GM10248 (cell line): ENCODE measurements at regions of chr17 and their contacts with region 1.

Region 1: GRCh38 chr17:12744298-12744697 is 45.0 kb upstream of the ARHGAP44 start:
- DNase-seq: no peak
- CTCF ChIP-seq: no peak

Region 2: GRCh38 chr17:12256380-12256995 is 487.8 kb before region 1 on chr17:
- CTCF ChIA-PET with region 1: interaction called, 12 read pairs
- POLR2A ChIA-PET with region 1: no interaction called
- DNase-seq: peak; percentile 47
- CTCF ChIP-seq: peak; percentile 75

Region 3: GRCh38 chr17:12659500-12659899 is 84.8 kb before region 1 on chr17:
- CTCF ChIA-PET with region 1: no interaction called
- POLR2A ChIA-PET with region 1: no interaction called
- DNase-seq: no peak
- CTCF ChIP-seq: no peak

Region 4: GRCh38 chr17:12756786-12757185 is 12.5 kb after region 1 on chr17:
- CTCF ChIA-PET with region 1: interaction called, 23 read pairs
- POLR2A ChIA-PET with region 1: no interaction called
- DNase-seq: no peak
- CTCF ChIP-seq: no peak